HEK293 (cell line): ENCODE measurements at regions of chr20 and their contacts with region 1.

Region 1: GRCh38 chr20:18507218-18508021 is at the start of gene SEC23B:
- H3K4me3 ChIP-seq: peak within 1 kb of the TSS; percentile 92
- H3K27ac ChIP-seq: peak within 1 kb of the TSS; percentile 72
- H3K4me1 ChIP-seq: 0 out of 2 replicates have a peak, but pooled peaks cover 2% of the 10 kb centered on the region
- CTCF ChIP-seq: 0 out of 2 replicates have a peak, but pooled peaks have one; percentile 14

Region 2: DNA sequence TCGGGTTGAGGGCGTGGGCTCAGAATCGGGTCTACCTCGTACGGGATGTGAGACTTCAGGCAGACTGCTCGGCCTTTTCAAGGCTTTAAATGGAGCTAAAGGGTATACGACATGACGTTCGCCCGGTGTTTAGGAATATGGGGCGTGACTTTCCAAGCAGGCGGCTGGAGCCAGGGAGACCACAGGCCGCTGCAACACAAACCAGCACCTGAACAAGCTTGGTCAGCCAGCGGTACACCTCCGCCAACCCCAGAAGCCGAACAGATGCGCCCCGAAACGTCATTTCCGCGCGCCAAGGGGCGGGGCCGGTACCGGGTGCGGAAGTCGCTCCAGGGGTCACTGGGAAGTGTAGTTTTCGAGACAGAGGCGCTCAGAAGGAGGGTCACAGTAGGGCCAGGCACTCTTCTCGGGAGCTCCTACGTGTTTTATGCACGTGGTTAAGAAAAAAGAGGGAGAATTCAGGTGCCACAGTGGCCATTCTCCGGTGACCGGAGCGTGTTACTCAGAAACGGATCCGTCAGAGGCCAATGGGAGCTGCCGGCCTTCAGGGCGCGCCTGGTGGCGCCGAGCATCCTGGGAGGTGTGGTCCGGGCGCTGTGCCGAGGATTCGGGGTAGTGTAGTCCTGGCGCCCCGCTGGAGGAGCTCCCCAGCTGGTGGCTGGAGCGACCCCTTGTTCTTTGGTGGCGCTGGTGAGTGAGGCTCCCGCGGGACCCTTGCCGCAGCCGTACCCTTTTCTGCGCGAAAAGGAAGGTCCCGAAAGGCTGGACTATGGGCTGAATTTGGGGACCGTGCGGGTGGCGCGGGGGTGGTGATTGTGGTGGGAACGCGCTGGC is 219.3 kb before region 1 on chr20 and contains the start of gene ZNF133:
- CTCF ChIA-PET with region 1: no interaction called
- POLR2A ChIA-PET with region 1: interaction called, 11 read pairs
- H3K4me3 ChIP-seq: peak within 1 kb of the TSS; percentile 96
- H3K27ac ChIP-seq: peak within 1 kb of the TSS; percentile 75
- H3K4me1 ChIP-seq: no peaks in the 10 kb centered on the region
- CTCF ChIP-seq: peak; percentile 96

Region 3: GRCh38 chr20:18456600-18456999 is 50.8 kb before region 1 on chr20:
- CTCF ChIA-PET with region 1: no interaction called
- POLR2A ChIA-PET with region 1: no interaction called
- H3K4me3 ChIP-seq: no peak overlapping the region
- H3K27ac ChIP-seq: no peak overlapping the region
- H3K4me1 ChIP-seq: no peaks in the 10 kb centered on the region
- CTCF ChIP-seq: no peak

Region 4: DNA sequence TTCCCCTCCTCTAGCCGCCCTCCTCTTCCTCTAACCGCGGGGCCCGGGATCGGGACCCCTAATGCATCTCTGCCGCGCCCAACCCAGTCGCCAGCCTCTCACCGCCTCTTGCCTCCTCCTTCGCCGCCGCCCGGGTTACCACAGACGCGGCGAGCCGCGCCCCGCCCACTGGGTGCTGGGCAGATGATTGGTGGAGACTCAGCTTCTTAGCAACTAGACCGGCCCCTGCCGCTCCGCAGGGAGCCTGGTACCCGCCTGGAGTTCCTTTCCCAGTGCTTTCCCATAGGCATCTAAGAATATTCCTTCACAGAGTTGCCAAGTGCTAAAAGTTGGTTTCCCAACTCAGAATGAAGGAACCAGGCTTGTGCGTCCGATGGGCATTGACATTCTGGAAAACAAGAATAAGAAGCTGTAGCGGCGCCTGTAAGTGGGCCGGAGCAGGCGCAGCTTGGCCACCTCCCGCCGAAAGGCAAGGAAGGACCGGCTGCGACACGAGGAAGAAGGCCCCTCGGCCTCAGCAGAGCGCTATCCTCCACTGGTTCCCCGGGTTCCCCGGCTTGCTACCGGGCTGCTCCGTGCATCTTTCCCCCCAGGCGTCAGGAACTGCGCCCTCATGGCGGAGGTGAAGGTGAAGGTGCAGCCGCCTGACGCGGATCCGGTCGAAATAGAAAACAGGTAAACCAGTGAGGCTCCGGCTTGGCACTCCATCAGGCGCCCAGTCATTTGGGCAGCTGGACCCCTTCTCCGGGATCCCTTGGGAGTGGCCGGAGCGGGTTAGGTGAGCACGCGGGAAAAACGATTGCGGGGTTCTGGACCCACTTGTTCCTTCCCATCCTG is 40.3 kb before region 1 on chr20 and contains the starts of genes DZANK1 and POLR3F:
- CTCF ChIA-PET with region 1: interaction called, 3 read pairs
- POLR2A ChIA-PET with region 1: interaction called, 42 read pairs
- H3K4me3 ChIP-seq: peak within 1 kb of the TSS; percentile 99
- H3K27ac ChIP-seq: peak within 1 kb of the TSS; percentile 85
- H3K4me1 ChIP-seq: peaks cover 4% of the 10 kb centered on the region; the same call in 1 of the 2 replicates
- CTCF ChIP-seq: 0 out of 2 replicates have a peak, but pooled peaks have one; percentile 14

Region 5: GRCh38 chr20:18496740-18497592 is 10.5 kb before region 1 on chr20 and contains the start of gene RBBP9:
- CTCF ChIA-PET with region 1: interaction called, 3 read pairs
- POLR2A ChIA-PET with region 1: interaction called, 90 read pairs
- H3K4me3 ChIP-seq: peak within 1 kb of the TSS; percentile 98
- H3K27ac ChIP-seq: peak within 1 kb of the TSS; percentile 66; the same call in 1 of the 2 replicates
- H3K4me1 ChIP-seq: no peaks in the 10 kb centered on the region; the same call in 1 of the 2 replicates
- CTCF ChIP-seq: no peak; the same call in 1 of the 2 replicates

Region 6: DNA sequence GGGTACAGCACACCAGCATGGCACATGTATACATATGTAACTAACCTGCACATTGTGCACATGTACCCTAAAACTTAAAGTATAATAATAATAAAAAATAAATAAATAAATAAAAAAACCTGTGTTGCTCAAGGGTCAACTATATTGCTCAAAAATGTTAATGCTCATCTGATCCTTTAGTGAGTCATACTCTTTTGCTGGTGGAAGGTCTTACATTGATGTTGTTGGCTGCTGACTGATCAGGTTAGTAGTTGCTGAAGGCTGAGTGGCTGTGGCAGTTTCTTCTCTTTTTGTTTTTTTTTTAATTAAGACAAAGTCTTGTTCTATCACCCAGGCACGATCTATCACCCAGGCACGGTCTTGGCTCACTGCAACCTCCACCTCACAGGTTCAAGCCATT is 30.2 kb after region 1 on chr20:
- CTCF ChIA-PET with region 1: no interaction called
- POLR2A ChIA-PET with region 1: no interaction called
- H3K4me3 ChIP-seq: no peak overlapping the region
- H3K27ac ChIP-seq: no peak overlapping the region
- H3K4me1 ChIP-seq: no peaks in the 10 kb centered on the region
- CTCF ChIP-seq: no peak